HEK293 (cell line): ENCODE measurements at regions of chr18 and their contacts with region 1.

Region 1: DNA sequence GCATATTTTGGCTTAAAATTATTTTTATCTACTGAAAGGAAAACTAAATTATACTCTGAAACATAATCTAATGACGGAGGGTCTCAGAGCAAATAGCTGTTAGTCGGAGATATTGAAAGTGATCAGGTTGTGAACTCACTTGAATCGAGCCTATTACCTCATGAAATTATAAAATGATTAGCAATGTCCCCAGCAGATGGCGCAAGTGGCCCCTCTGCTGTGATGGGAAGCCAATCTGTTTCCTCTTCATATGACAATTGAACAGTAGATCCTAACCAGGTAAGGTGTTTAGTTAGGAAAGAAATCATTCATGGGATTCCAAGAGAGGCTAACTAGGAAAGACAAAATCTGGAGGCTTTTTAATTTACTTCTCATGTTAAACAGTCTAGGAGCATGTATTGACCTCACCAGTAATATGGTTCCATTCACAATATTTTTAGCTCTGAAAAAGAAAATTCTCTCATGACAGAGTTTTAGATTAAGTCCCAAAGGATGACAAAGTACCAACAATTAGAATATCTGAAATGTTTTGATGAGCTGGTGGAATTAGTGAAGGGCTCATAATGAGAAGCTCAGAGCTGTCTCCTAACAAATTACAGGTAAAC is 29.9 kb upstream of the MPPE1 start:
- H3K4me3 ChIP-seq: no peak overlapping the region
- H3K27ac ChIP-seq: no peak overlapping the region
- H3K4me1 ChIP-seq: no peaks in the 10 kb centered on the region
- CTCF ChIP-seq: no peak

Region 2: GRCh38 chr18:11733031-11733430 is 204.9 kb before region 1 on chr18:
- CTCF ChIA-PET with region 1: interaction called, 19 read pairs
- POLR2A ChIA-PET with region 1: no interaction called
- H3K4me3 ChIP-seq: no peak overlapping the region; the same call in 1 of the 2 replicates
- H3K27ac ChIP-seq: no peak overlapping the region
- H3K4me1 ChIP-seq: no peaks in the 10 kb centered on the region
- CTCF ChIP-seq: peak; percentile 91

Region 3: GRCh38 chr18:11908182-11909060 is 29.6 kb before region 1 on chr18 and contains the start of gene MPPE1:
- CTCF ChIA-PET with region 1: interaction called, 21 read pairs
- POLR2A ChIA-PET with region 1: no interaction called
- H3K4me3 ChIP-seq: peak within 1 kb of the TSS; percentile 73
- H3K27ac ChIP-seq: peak within 1 kb of the TSS; percentile 96
- H3K4me1 ChIP-seq: 0 out of 2 replicates have a peak, but pooled peaks cover 4% of the 10 kb centered on the region
- CTCF ChIP-seq: peak; percentile 61

Region 4: DNA sequence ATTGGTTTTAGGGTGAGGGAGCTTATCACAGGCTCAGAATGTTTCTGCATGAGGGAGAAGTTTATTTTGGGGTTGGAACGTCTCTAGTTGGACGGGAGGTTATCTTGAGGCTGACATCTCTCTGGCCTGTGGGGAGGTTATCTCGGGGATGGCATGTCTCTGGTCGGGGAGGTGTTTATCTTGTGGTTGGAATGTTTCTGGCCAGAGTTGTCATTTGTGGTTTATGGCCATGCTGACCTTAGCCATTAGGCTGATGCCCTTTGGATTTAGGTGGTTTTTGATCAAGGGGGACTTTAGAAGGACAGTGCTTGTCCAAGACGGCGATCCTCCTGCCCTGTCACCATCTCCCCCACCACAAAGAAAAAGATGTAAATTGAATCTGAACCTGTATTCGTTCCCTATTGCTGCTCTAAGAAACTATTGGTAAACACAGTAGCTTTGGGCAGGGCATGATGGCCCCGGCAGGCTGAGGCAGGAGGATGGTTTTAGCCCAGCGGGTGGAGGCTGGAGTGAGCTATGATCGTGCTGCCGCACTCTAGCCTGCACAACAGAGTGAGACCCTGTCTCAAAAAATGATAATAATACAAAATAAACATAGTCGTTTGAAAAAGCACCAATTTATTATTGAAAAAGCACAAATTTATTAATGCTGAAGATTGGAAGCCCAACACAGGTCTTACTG is 12.0 kb before region 1 on chr18:
- CTCF ChIA-PET with region 1: interaction called, 87 read pairs
- POLR2A ChIA-PET with region 1: no interaction called
- H3K4me3 ChIP-seq: no peak overlapping the region
- H3K27ac ChIP-seq: no peak overlapping the region
- H3K4me1 ChIP-seq: no peaks in the 10 kb centered on the region
- CTCF ChIP-seq: no peak

Region 5: DNA sequence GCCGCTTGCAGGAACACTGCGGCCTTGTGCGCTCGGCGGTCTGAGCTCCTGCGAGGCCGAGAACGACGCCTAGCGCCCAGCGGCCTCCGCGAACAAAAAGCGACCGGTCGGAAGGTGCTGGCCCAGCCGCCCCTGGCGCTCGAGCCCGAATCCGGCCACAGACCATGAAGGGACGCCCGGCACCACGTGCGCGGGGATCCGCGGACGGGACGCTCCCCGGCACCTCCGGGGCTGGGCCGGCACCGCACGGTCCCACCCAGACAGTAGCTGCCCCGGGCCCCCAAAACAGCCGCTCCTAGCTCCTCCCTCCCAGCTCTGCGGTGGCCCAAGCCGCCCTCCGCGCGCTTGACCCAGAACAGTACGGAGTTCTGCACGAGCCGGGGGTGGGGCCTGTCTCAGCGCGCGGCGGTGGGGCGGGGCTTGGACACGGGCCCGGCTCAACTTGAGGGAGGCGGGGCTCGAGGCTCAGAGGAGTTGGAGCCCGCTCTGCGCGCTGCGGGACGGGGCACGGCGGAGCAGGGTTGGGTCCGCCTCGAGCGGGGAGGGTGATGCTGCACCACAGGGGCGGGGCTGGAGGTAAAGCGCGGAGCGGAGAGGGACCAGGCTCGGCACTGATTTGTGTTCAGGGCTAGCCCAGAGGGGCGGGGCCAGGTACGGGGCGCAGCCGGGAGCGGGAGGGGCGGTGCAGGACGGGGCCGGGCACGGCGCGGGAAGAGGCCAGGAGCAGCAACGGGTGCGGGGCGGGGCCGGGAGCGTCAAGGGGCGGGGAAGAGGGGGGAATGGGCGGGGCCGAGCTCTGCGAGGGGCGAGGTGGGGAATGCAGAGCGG is 42.8 kb after region 1 on chr18:
- CTCF ChIA-PET with region 1: interaction called, 16 read pairs
- POLR2A ChIA-PET with region 1: interaction called, 9 read pairs
- H3K4me3 ChIP-seq: peak overlapping the region; percentile 52
- H3K27ac ChIP-seq: peak overlapping the region; percentile 94
- H3K4me1 ChIP-seq: peaks cover 3% of the 10 kb centered on the region; the same call in 1 of the 2 replicates
- CTCF ChIP-seq: peak; percentile 93

Region 6: GRCh38 chr18:12038639-12039417 is 100.9 kb after region 1 on chr18:
- CTCF ChIA-PET with region 1: interaction called, 64 read pairs
- POLR2A ChIA-PET with region 1: no interaction called
- H3K4me3 ChIP-seq: peak overlapping the region; percentile 52
- H3K27ac ChIP-seq: no peak overlapping the region; the same call in 1 of the 2 replicates
- H3K4me1 ChIP-seq: no peaks in the 10 kb centered on the region; the same call in 1 of the 2 replicates
- CTCF ChIP-seq: peak; percentile 99

Region 7: GRCh38 chr18:12287684-12288402 is 349.9 kb after region 1 on chr18:
- CTCF ChIA-PET with region 1: no interaction called
- POLR2A ChIA-PET with region 1: no interaction called
- H3K4me3 ChIP-seq: peak overlapping the region; percentile 33
- H3K27ac ChIP-seq: no peak overlapping the region
- H3K4me1 ChIP-seq: no peaks in the 10 kb centered on the region
- CTCF ChIP-seq: no peak; the same call in 1 of the 2 replicates